ENCODE measurements at regions of chr17 and their contacts with region 1.

Region 1: DNA sequence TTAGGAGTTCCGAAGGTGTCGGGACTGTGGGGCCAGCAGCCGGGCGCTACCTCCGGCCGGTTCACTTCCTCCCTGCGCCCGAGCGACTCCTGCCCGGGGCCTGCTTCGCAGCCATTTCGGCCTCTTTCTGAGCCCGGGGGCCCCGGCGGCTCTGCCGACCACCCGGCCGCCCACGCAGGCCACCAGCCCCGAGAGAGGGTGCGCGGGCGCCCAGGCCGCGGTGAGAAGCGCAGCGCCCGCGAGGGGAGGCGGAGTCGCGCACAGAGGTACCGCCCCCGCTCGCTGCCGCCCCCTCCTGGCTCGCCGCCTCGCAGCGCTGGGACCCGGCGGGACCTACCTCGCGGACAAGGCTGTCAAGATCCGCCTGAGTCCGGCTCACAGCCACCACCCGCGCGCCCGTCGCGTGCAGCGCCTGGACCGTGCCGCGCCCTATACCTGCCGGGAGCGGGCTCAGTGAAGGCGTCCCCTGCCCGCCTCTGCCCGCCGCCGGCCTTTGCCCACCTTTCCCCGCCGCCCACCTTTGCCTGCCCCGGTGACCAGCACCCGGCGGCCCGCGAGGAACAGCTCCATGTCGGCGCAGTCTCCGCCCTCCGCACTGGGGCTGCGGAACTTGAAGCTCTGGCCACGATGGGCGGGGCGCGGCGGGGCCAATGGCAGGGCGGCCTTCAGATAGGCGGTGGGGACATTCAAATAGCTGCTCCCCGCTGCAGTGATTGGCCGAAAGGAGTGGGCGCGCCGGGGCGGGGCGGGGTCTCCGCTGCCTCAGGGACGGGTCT is at the start of gene DCXR:
- DNase-seq: peak; percentile 97
- H3K4me3 Mint-ChIP-seq: peak within 1 kb of the TSS; percentile 83
- H3K27ac Mint-ChIP-seq: peak within 1 kb of the TSS; percentile 88
- H3K4me1 Mint-ChIP-seq: peaks cover 19% of the 10 kb centered on the region
- H3K27me3 Mint-ChIP-seq: no peaks in the 10 kb centered on the region
- total RNA-seq, gene DCXR: 105 to 115 TPM

Region 2: DNA sequence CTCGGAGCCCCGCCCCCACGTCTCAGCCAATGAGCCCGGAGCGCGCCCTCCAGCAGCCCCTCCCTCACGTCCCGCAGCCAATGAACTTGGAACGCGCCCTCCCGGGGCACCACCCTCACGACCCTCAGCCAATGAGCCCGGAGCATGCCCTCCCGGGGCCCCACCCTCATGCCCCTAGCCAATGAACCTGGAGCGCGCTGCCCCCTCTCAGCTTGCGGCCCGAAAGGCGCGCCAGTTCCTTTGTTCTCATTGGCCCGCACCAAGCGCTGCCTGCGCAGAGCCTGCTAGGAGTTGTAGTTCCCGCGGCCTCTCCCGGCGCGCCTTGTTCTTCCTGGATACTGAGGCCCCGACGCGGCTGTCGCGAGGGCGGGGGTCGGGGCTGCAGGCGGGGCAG is 14.3 kb before region 1 on chr17 and contains the start of gene LRRC45:
- CTCF ChIA-PET with region 1: interaction called, 14 read pairs
- POLR2A ChIA-PET with region 1: interaction called, 8 read pairs
- intact Hi-C with region 1: loop called (anchors 2 kb)
- DNase-seq: peak; percentile 100
- H3K4me3 Mint-ChIP-seq: peak within 1 kb of the TSS; percentile 84
- H3K27ac Mint-ChIP-seq: peak within 1 kb of the TSS; percentile 66
- H3K4me1 Mint-ChIP-seq: peaks cover 24% of the 10 kb centered on the region
- H3K27me3 Mint-ChIP-seq: no peaks in the 10 kb centered on the region
- total RNA-seq, gene LRRC45: 16.3 to 19.0 TPM

Region 3: DNA sequence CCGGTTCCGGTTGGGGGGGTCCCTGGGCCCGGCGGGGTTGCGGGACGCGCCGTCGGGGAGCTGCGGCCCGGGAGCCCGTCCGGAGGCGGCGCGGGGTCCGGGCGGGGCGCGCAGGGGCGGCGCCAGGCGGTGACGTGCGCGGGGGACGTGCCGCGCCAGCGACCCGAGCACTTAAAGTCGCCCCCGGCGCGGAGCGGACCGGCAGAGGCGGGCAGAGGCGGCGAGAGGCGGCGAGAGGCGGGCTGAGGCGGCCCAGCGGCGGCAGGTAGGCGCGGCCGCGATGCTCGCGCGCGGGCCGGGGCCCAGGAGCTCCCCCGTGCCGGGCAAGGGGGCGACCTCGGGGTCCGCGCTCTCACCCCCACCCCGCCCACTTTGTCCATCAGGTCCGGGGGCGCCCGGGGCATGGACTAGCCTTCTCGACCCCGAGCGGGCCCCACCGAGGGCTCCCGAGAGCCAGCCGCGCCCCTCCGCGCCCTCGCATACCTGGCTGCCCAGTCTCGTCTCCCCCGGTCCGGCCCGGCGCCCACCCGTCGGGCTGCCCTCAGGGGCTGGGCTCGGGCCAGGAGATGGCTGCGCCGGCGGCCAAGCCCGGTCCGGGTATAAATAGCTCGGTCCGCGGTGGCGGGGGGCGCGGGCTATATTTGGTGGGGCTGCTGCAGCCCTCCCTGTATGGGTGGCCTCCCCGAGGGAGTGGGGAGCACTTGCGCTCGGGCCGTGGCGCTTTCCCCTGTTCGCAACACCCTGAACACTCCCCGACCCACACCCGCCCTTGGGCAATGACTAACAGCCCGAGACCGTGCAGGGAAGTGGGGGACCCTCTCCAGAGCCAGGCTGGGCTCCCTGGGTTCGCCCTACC is 191.8 kb after region 1 on chr17 and contains the start of gene SLC16A3:
- CTCF ChIA-PET with region 1: no interaction called
- POLR2A ChIA-PET with region 1: no interaction called
- intact Hi-C with region 1: no loop called
- DNase-seq: peak; percentile 66
- H3K4me3 Mint-ChIP-seq: peak within 1 kb of the TSS; percentile 82
- H3K27ac Mint-ChIP-seq: peak within 1 kb of the TSS; percentile 84
- H3K4me1 Mint-ChIP-seq: peaks cover 9% of the 10 kb centered on the region
- H3K27me3 Mint-ChIP-seq: no peaks in the 10 kb centered on the region
- total RNA-seq, gene SLC16A3: 97.4 to 99.7 TPM

Measured in activated CD4-positive, alpha-beta memory T cell treated with anti-CD3 and anti-CD28 coated beads for 36 hours (primary cell).